Thyroid gland (tissue), 4 donors: ENCODE measurements at regions of chr10 and their contacts with region 1.

Region 1: GRCh38 chr10:24556750-24557742 is 166.6 kb downstream of the ARHGAP21 start:
- DNase-seq: peak in 1 of 2 donors; percentile 47
- H3K4me3 ChIP-seq: no peak overlapping the region
- H3K27ac ChIP-seq: no peak overlapping the region
- H3K4me1 ChIP-seq: peaks cover 3 to 19% of the 10 kb centered on the region in 2 donors
- H3K27me3 ChIP-seq: no peaks in the 10 kb centered on the region
- CTCF ChIP-seq: peak in 5 of 6 experiments; percentile 14 to 78 (median 71)
- POLR2A ChIP-seq: no peak

Region 2: DNA sequence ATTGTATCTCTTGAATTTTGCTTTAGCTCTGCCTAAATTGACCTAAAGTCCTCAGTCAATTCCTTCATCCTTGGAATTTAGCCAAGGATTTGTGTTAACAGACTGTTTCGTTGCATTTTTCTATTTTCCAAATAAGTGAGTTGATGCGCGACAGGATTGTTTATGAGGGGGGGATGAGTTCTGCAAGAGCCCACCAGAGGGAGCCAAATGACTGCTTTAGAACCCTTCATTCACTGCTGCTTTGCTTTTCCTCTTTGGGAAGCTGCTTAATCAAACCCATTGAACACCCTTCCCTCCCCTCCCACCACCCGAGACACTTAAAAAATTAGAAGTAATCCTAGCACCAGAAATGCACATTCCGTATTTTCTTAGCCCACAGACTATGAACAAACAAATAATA is 1398.7 kb before region 1 on chr10:
- intact Hi-C with region 1: loop called (anchors 10 kb)
- DNase-seq: peak; percentile 58 to 64
- H3K4me3 ChIP-seq: no peak overlapping the region
- H3K27ac ChIP-seq: peak overlapping the region in 2 of 3 donors; percentile 78 to 81
- H3K4me1 ChIP-seq: peaks cover 8 to 12% of the 10 kb centered on the region in 2 donors
- H3K27me3 ChIP-seq: no peaks in the 10 kb centered on the region
- CTCF ChIP-seq: peak; percentile 35 to 93 (median 80)
- POLR2A ChIP-seq: no peak

Region 3: DNA sequence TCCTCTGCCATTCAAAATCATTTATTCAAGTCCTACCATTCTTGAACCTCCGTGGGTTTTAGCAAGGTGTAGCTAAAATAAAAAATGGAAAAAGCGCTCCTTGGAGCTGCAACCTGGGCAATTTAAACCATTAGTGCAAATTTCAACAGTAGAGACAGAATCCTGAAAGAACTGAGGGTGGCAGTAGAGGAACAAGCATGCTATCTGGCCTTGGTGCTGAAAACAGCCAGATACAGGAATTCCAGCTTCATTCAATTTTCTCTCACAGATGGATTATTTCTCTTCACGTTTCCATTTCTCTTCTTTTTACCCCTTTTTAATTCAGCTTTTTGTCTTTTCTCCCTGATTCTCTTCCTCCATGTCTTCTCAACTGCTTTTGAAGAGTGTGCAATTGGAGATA is 1040.5 kb before region 1 on chr10:
- intact Hi-C with region 1: loop called (anchors 10 kb)
- DNase-seq: no peak
- H3K4me3 ChIP-seq: no peak overlapping the region
- H3K27ac ChIP-seq: no peak overlapping the region
- H3K4me1 ChIP-seq: no peaks in the 10 kb centered on the region
- H3K27me3 ChIP-seq: no peaks in the 10 kb centered on the region
- CTCF ChIP-seq: peak in 4 of 6 experiments; percentile 24 to 55 (median 38)
- POLR2A ChIP-seq: no peak

Region 4: DNA sequence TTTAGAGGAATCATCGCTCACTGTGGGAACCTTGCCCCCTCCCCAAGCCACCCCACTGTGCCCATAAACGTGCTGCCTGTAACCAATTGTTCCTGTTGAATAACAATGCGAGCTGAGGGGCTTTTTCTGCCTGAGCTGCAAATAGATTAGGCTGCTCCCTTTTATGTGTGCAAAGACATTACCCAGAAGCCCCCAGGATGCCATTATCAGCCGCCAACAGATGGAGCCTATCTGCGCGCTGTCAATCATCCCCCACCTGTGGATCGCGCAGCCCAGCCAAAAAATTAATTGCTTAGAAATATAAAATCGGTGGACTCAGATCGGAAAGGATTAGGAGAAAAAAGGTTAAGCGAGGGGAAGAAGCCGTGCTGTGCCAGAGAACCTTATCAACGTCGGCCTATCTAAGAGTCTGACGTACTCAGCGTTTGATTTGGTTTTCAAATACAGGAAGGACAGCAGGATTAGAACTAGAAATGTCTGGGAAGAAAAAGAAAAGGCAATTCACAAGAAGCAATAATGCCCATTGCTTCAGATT is 1209.7 kb after region 1 on chr10:
- intact Hi-C with region 1: no loop called
- DNase-seq: no peak
- H3K4me3 ChIP-seq: no peak overlapping the region
- H3K27ac ChIP-seq: no peak overlapping the region
- H3K4me1 ChIP-seq: no peaks in the 10 kb centered on the region
- H3K27me3 ChIP-seq: no peaks in the 10 kb centered on the region
- CTCF ChIP-seq: no peak
- POLR2A ChIP-seq: no peak